ENCODE measurements at regions of chr3 and their contacts with region 1.

Region 1: GRCh38 chr3:3200632-3201212 is 21.2 kb upstream of the CRBN start:
- DNase-seq: peak; percentile 12
- ATAC-seq: peak; percentile 86
- H3K4me3 ChIP-seq: no peak overlapping the region
- H3K27ac ChIP-seq: no peak overlapping the region
- H3K4me1 ChIP-seq: peaks cover 4% of the 10 kb centered on the region; the same call in 1 of the 2 replicates
- H3K27me3 ChIP-seq: no peaks in the 10 kb centered on the region
- CTCF ChIP-seq: peak; percentile 71 to 88 (median 75)
- EP300 ChIP-seq: no peak
- POLR2A ChIP-seq: no peak
- RAD21 ChIP-seq: peak; percentile 98

Region 2: DNA sequence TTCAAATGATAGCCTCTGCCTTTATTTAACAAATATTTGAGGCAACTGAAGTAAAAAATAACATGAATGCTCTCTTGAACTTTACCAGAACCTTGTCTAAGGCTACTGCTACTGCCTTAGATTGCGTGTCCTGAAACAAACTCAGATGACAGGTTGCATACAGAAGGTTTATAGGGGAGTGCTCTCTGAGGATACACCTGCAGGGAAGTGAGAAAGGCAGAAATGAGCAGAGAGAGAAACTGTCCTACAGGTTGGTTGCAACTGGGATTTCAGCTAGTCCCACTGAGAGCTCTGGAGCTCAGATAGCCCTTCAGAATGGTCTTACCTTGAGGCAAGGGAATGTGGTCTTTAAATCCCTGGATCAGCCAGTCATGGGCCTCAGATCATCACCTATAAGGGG is 256.1 kb before region 1 on chr3:
- CTCF ChIA-PET with region 1: no interaction called
- POLR2A ChIA-PET with region 1: no interaction called
- RAD21 ChIA-PET with region 1: no interaction called
- SMC1A ChIA-PET with region 1: no interaction called
- in situ Hi-C with region 1: no loop called
- intact Hi-C with region 1: no loop called
- DNase-seq: peak; percentile 32
- ATAC-seq: peak; percentile 63
- H3K4me3 ChIP-seq: no peak overlapping the region
- H3K27ac ChIP-seq: peak overlapping the region; percentile 28; the same call in 1 of the 2 replicates
- H3K4me1 ChIP-seq: peaks cover 14% of the 10 kb centered on the region; the same call in 1 of the 2 replicates
- H3K27me3 ChIP-seq: no peaks in the 10 kb centered on the region; a peak in 2 of 4 replicates
- CTCF ChIP-seq: no peak
- EP300 ChIP-seq: no peak
- POLR2A ChIP-seq: no peak
- RAD21 ChIP-seq: 0 out of 2 replicates have a peak, but pooled peaks have one; percentile 7

Region 3: GRCh38 chr3:3005146-3005744 is 195.5 kb before region 1 on chr3:
- CTCF ChIA-PET with region 1: no interaction called
- POLR2A ChIA-PET with region 1: no interaction called
- RAD21 ChIA-PET with region 1: no interaction called
- SMC1A ChIA-PET with region 1: no interaction called
- in situ Hi-C with region 1: no loop called
- intact Hi-C with region 1: no loop called
- DNase-seq: no peak
- ATAC-seq: no peak
- H3K4me3 ChIP-seq: no peak overlapping the region
- H3K27ac ChIP-seq: no peak overlapping the region
- H3K4me1 ChIP-seq: no peaks in the 10 kb centered on the region
- H3K27me3 ChIP-seq: no peaks in the 10 kb centered on the region
- CTCF ChIP-seq: no peak
- EP300 ChIP-seq: no peak
- POLR2A ChIP-seq: no peak
- RAD21 ChIP-seq: no peak

Region 4: GRCh38 chr3:3221528-3221927 is 20.8 kb after region 1 on chr3:
- CTCF ChIA-PET with region 1: interaction called, 11 read pairs
- POLR2A ChIA-PET with region 1: no interaction called
- RAD21 ChIA-PET with region 1: interaction called, 3 read pairs
- SMC1A ChIA-PET with region 1: interaction called, 3 read pairs
- in situ Hi-C with region 1: no loop called
- intact Hi-C with region 1: no loop called
- DNase-seq: no peak
- ATAC-seq: no peak
- H3K4me3 ChIP-seq: no peak overlapping the region
- H3K27ac ChIP-seq: no peak overlapping the region
- H3K4me1 ChIP-seq: no peaks in the 10 kb centered on the region
- H3K27me3 ChIP-seq: no peaks in the 10 kb centered on the region
- CTCF ChIP-seq: no peak
- EP300 ChIP-seq: no peak
- POLR2A ChIP-seq: no peak
- RAD21 ChIP-seq: no peak

Region 5: GRCh38 chr3:3648988-3649679 is 448.4 kb after region 1 on chr3:
- CTCF ChIA-PET with region 1: no interaction called
- POLR2A ChIA-PET with region 1: no interaction called
- RAD21 ChIA-PET with region 1: no interaction called
- SMC1A ChIA-PET with region 1: interaction called, 3 read pairs
- in situ Hi-C with region 1: no loop called
- intact Hi-C with region 1: loop called (anchors 10 kb)
- DNase-seq: no peak
- ATAC-seq: no peak
- H3K4me3 ChIP-seq: no peak overlapping the region
- H3K27ac ChIP-seq: no peak overlapping the region
- H3K4me1 ChIP-seq: no peaks in the 10 kb centered on the region
- H3K27me3 ChIP-seq: no peaks in the 10 kb centered on the region; a peak in 1 of 4 replicates
- CTCF ChIP-seq: no peak
- EP300 ChIP-seq: no peak
- POLR2A ChIP-seq: no peak
- RAD21 ChIP-seq: no peak

Region 6: GRCh38 chr3:3998140-3998922 is 797.6 kb after region 1 on chr3:
- CTCF ChIA-PET with region 1: interaction called, 199 read pairs
- POLR2A ChIA-PET with region 1: interaction called, 3 read pairs
- RAD21 ChIA-PET with region 1: interaction called, 148 read pairs
- SMC1A ChIA-PET with region 1: interaction called, 129 read pairs
- in situ Hi-C with region 1: loop called (anchors 5 kb)
- intact Hi-C with region 1: loop called (anchors 1 kb)
- DNase-seq: peak; percentile 11
- ATAC-seq: peak; percentile 88
- H3K4me3 ChIP-seq: no peak overlapping the region
- H3K27ac ChIP-seq: no peak overlapping the region
- H3K4me1 ChIP-seq: no peaks in the 10 kb centered on the region
- H3K27me3 ChIP-seq: no peaks in the 10 kb centered on the region
- CTCF ChIP-seq: peak; percentile 73 to 77 (median 74)
- EP300 ChIP-seq: no peak
- POLR2A ChIP-seq: no peak
- RAD21 ChIP-seq: peak; percentile 81

Region 7: DNA sequence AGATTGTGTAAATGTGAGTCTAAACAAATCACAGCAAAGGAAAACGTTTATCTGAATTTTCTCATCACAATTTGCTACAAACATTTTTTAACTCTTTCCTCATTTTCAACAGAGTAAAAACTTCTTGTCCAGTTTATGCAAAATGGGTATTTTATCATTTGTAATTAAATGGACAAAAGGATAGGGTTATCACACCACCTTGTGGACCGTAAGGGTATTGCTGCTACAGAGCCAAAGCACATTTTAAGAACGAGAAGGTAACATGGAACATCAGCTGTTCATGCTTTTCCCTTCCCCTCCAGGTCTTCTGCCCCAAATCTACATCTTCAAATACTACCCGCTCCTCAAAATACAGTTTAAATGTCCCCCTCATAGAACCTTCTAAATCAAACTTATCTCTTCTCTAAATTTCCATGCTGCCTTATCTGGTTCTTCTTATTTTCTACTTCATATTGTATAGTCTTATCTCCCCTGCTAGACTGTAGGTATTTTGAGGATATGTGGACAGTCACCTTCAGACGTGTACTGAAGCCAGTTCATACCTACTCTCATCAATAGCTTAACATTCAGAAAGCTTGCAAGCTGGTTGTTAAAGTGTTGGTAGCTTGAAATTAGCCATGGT is 1089.7 kb after region 1 on chr3:
- CTCF ChIA-PET with region 1: interaction called, 46 read pairs
- POLR2A ChIA-PET with region 1: interaction called, 3 read pairs
- RAD21 ChIA-PET with region 1: interaction called, 23 read pairs
- SMC1A ChIA-PET with region 1: interaction called, 23 read pairs
- in situ Hi-C with region 1: loop called (anchors 5 kb)
- intact Hi-C with region 1: loop called (anchors 1 kb)
- DNase-seq: no peak
- ATAC-seq: peak; percentile 75
- H3K4me3 ChIP-seq: no peak overlapping the region
- H3K27ac ChIP-seq: no peak overlapping the region
- H3K4me1 ChIP-seq: no peaks in the 10 kb centered on the region
- H3K27me3 ChIP-seq: peaks cover 0 to 2% of the 10 kb centered on the region in 2 experiments; a peak in 2 of 4 replicates
- CTCF ChIP-seq: peak; percentile 83 to 86 (median 85)
- EP300 ChIP-seq: no peak
- POLR2A ChIP-seq: no peak
- RAD21 ChIP-seq: peak; percentile 88

Measured in GM12878 (cell line).